ENCODE measurements at regions of chr3 and their contacts with region 1.

Region 1: DNA sequence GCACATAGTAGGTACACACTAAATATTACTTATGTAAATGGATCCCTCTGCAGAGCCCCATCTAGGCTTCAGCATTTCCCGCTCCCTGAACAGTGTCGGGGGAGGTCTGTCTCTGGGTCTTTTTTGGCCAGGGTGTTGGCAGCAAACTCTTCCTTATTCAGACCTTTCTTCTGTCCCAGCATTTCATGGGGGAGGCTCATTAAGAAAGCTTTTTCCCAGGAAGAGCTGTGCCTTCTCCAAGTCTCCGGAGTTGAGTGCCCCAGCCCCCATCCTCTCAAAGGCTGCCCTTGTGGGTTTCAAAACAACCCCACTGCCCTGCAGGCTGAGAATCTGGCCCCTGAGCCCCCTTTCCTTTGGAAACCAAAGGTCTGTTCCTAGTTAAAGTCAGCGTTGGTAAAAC is 25.1 kb downstream of the SLC6A11 start:
- DNase-seq: no peak
- H3K4me3 ChIP-seq: no peak overlapping the region
- H3K27ac ChIP-seq: no peak overlapping the region
- H3K4me1 ChIP-seq: no peaks in the 10 kb centered on the region
- H3K27me3 ChIP-seq: no peaks in the 10 kb centered on the region
- CTCF ChIP-seq: no peak

Region 2: DNA sequence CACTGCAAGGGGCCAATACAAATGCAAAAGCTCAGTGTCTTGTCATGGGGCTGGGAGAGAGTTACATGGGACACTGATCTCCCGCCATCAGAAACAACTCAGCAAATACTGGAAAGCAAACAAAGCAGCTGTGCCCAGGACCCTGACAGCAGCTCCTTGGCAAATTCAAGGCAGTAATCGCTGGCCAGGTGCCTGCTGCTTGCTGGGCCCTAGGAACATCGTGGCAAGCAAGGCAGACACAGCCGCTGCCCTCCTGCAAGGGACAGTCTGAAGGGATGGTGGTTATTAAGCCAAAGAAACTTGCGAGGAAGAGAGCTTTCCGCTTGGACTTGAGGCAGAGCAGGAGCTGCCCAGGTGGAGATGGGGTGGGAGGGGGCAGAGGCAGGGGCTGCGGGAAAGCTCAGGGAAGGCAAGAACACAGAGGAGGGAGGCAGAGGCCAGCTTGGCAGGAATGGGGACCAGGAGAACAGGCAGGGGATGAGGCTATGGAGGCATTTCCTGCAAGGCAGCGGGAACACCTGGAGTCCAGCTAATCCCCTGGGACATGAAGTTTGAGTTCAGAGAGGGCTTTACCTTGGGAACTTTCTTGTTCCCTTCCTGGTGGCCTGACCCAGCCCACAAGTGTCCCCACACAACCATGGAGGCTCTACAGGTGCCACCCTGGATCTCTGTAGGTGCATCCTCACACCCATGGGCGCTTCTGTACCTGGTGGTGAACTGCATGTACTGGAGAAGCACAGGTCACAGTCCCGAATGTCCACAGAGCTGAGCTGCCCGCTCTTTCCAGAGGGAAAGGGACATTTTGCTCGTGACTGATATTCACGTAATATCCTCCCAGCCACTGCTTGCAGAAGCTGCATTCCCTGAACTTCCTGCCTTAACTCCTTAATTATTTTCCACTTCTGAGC is 257.0 kb before region 1 on chr3:
- CTCF ChIA-PET with region 1: no interaction called
- dilution Hi-C with region 1: no loop called
- in situ Hi-C with region 1: no loop called
- intact Hi-C with region 1: no loop called
- DNase-seq: no peak
- H3K4me3 ChIP-seq: no peak overlapping the region
- H3K27ac ChIP-seq: no peak overlapping the region
- H3K4me1 ChIP-seq: no peaks in the 10 kb centered on the region
- H3K27me3 ChIP-seq: no peaks in the 10 kb centered on the region
- CTCF ChIP-seq: no peak

Region 3: GRCh38 chr3:10791627-10792026 is 49.5 kb before region 1 on chr3:
- CTCF ChIA-PET with region 1: no interaction called
- dilution Hi-C with region 1: no loop called
- in situ Hi-C with region 1: no loop called
- intact Hi-C with region 1: no loop called
- DNase-seq: no peak
- H3K4me3 ChIP-seq: no peak overlapping the region
- H3K27ac ChIP-seq: no peak overlapping the region
- H3K4me1 ChIP-seq: no peaks in the 10 kb centered on the region
- H3K27me3 ChIP-seq: no peaks in the 10 kb centered on the region
- CTCF ChIP-seq: no peak

Region 4: DNA sequence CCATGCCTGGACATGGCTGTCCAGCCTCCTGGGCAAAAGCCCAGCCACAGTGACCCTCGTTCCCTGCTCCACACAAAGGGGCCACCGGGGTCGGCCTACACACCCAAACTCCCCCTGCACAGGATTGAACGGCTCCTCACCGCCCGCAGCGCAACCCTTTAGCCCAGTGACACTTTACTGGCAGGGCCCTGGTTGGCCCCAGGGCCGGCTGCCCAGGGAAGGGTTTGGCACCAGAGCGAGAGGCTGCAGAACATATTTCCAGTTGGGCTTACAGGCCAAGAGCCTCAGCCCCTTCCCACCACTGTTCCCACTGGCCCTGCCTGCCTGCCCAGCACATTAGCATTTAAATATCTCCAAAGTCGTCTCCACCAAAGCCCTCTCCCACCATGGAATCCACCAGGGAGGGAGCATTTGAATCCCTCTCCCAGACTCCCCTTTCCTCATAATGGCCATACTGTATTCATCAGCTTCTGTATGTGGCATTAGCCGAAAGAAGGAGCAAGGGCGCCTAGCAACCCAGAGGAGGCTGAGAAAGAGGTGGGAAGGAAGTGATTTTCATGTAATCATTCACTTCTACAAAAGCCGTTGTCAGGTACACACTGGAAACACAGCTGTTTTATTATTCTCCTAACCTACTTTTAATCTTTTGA is 60.3 kb after region 1 on chr3:
- CTCF ChIA-PET with region 1: no interaction called
- dilution Hi-C with region 1: loop called (anchors 5 kb)
- in situ Hi-C with region 1: no loop called
- intact Hi-C with region 1: no loop called
- DNase-seq: no peak
- H3K4me3 ChIP-seq: no peak overlapping the region
- H3K27ac ChIP-seq: no peak overlapping the region
- H3K4me1 ChIP-seq: peaks cover 11% of the 10 kb centered on the region
- H3K27me3 ChIP-seq: no peaks in the 10 kb centered on the region
- CTCF ChIP-seq: no peak

Measured in mammary epithelial cell (primary cell).